Heart right ventricle (tissue), 16 donors: ENCODE measurements at regions of chr3 and their contacts with region 1.

Region 1: DNA sequence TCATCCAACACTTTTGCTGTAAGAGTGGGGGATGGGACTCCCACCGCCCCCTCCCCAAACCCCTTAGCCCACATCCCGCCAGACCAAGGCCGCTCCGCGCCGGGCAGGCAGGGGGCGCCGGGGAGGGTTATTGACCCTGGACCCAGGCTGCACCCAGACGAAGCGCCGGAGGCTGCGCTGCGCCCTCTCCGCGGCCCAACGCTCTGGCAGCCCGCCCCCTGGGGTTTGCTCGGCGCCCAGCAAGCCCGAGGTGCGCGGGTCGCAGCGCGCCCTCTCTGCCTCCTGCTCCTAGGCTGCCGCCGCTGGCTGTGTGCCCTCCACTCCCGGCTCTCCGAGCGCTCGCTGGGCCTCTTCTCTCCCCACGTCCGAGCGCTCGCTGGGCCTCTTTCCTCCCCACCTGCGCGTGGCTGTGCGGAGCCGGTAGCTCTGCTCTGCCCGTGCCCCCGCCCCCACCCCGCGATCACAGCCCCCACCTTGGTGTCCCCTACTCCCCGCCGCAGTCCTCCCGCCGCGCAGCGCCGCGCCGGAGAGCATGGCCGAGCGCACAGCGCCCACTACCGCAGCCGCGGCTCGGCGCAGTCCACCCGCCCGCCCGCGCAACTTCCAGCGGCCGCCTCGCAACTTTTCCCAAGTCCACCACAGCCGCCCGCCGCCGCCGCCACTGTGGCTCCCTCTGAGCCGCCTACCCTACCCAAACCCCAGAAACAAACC is 1.2 kb downstream of the MECOM start:
- DNase-seq: peak; percentile 65 to 79
- ATAC-seq: peak; percentile 78 to 92 (median 82)
- H3K4me3 ChIP-seq: peak overlapping the region; percentile 65 to 95 (median 78)
- H3K27ac ChIP-seq: peak overlapping the region; percentile 86 to 98 (median 93)
- H3K4me1 ChIP-seq: peaks cover 0 to 64% (median 23%) of the 10 kb centered on the region in 9 donors
- H3K27me3 ChIP-seq: peaks cover 0 to 100% (median 62%) of the 10 kb centered on the region in 7 donors
- CTCF ChIP-seq: peak; percentile 19 to 70 (median 56)

Region 2: GRCh38 chr3:169143506-169143905 is 518.8 kb before region 1 on chr3:
- intact Hi-C with region 1: loop called (anchors 1 to 5 kb)
- DNase-seq: no peak
- ATAC-seq: no peak
- H3K4me3 ChIP-seq: peak overlapping the region in 9 of 10 donors; percentile 4 to 69 (median 61)
- H3K27ac ChIP-seq: peak overlapping the region in 9 of 10 donors; percentile 13 to 96 (median 86)
- H3K4me1 ChIP-seq: peaks cover 0 to 24% (median 13%) of the 10 kb centered on the region in 9 donors
- H3K27me3 ChIP-seq: peaks cover 0 to 68% (median 37%) of the 10 kb centered on the region in 7 donors
- CTCF ChIP-seq: no peak

Region 3: GRCh38 chr3:169218314-169218983 is 443.8 kb before region 1 on chr3:
- intact Hi-C with region 1: loop called in 7 of 10 experiments (anchors 5 to 10 kb)
- DNase-seq: peak; percentile 12 to 59
- ATAC-seq: peak in 7 of 8 donors; percentile 68 to 92 (median 85)
- H3K4me3 ChIP-seq: no peak overlapping the region
- H3K27ac ChIP-seq: peak overlapping the region in 3 of 10 donors; percentile 13 to 58 (median 19)
- H3K4me1 ChIP-seq: peaks cover 0 to 18% (median 4%) of the 10 kb centered on the region in 9 donors
- H3K27me3 ChIP-seq: no peaks in the 10 kb centered on the region
- CTCF ChIP-seq: peak; percentile 28 to 77 (median 60)

Region 4: GRCh38 chr3:169390271-169391230 is 271.7 kb before region 1 on chr3:
- intact Hi-C with region 1: loop called in 4 of 10 experiments (anchors 5 to 10 kb)
- DNase-seq: no peak
- ATAC-seq: peak in 1 of 8 donors; percentile 43
- H3K4me3 ChIP-seq: no peak overlapping the region
- H3K27ac ChIP-seq: peak overlapping the region in 3 of 10 donors; percentile 11 to 86 (median 59)
- H3K4me1 ChIP-seq: peaks cover 0 to 38% (median 31%) of the 10 kb centered on the region in 9 donors
- H3K27me3 ChIP-seq: no peaks in the 10 kb centered on the region
- CTCF ChIP-seq: peak in 3 of 9 donors; percentile 6 to 20 (median 8)

Region 5: GRCh38 chr3:169460035-169460434 is 202.3 kb before region 1 on chr3:
- intact Hi-C with region 1: loop called in 3 of 10 experiments (anchors 5 to 10 kb)
- DNase-seq: peak in 1 of 2 donors; percentile 42
- ATAC-seq: peak in 5 of 8 donors; percentile 74 to 82 (median 79)
- H3K4me3 ChIP-seq: no peak overlapping the region
- H3K27ac ChIP-seq: peak overlapping the region in 4 of 10 donors; percentile 12 to 67 (median 60)
- H3K4me1 ChIP-seq: peaks cover 0 to 42% (median 5%) of the 10 kb centered on the region in 9 donors
- H3K27me3 ChIP-seq: no peaks in the 10 kb centered on the region
- CTCF ChIP-seq: no peak

Region 6: DNA sequence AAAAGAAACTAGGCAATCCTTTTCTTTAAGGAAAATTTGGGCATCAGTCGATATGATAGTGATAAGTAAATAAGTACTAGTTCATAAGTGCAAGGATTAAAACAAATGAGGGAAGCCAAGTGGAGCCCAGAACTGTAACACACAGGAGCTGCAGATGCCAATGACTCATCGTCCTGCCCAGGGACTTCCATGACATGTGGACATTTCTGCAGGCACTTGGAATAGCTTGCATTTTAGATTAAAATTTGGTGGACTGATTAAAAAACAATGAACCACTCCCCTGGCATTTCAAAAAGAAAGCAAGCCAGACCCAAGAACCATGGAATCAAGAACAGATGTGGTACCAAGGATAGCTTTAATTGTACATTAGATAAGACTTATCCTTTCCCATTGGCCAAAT is 252.0 kb after region 1 on chr3:
- intact Hi-C with region 1: no loop called
- DNase-seq: no peak
- ATAC-seq: peak in 2 of 8 donors; percentile 52 to 70
- H3K4me3 ChIP-seq: no peak overlapping the region
- H3K27ac ChIP-seq: no peak overlapping the region
- H3K4me1 ChIP-seq: peaks cover 0 to 13% (median 5%) of the 10 kb centered on the region in 9 donors
- H3K27me3 ChIP-seq: no peaks in the 10 kb centered on the region
- CTCF ChIP-seq: no peak